ENCODE measurements at regions of chr1 and their contacts with region 1.

Region 1: DNA sequence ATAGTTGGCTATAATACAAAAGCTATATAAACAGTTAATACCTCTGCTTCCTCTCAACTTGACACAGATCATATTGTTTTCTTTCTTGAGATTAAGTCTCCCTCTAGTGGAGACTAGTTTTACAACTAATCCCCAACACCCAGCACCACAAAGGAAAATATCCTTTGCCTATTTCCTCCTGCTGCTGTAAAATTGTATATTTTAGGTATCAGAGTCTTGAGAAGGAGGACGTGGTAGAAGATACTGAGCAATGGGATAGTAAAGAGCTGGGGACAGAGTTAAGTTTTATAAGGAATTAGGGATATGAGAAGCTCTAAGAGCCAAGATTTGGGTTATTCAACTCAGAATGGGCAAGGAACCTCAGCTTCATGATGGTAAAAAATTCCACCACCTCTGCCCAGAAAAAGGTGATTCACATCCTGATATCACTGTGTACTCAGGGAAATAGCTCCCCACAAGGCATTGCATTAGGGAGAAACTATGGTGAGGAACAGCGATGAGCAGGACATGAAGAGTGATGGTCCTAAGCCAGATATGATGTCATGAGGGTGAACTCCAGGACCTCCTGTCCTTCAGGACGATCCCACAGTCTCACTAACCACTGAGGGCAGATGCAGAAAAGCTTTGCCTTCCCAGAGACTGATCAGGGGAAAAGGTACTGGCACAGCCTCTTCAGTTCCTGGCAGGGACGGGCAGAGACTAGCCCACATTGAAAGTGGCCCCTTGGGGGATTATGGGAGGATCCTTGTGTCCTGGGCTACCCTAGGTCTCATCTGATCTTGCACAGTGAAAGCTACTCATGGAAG is 14.7 kb upstream of the CFAP126 start:
- DNase-seq: no peak
- H3K4me3 Mint-ChIP-seq: no peak overlapping the region
- H3K27ac Mint-ChIP-seq: no peak overlapping the region
- H3K4me1 Mint-ChIP-seq: peaks cover 9% of the 10 kb centered on the region
- H3K27me3 Mint-ChIP-seq: no peaks in the 10 kb centered on the region
- CTCF ChIP-seq: peak; percentile 50

Region 2: GRCh38 chr1:161192476-161193465 is 189.6 kb before region 1 on chr1:
- CTCF ChIA-PET with region 1: interaction called, 8 read pairs
- intact Hi-C with region 1: loop called (anchors 2 kb)
- DNase-seq: peak; percentile 66
- H3K4me3 Mint-ChIP-seq: no peak overlapping the region
- H3K27ac Mint-ChIP-seq: no peak overlapping the region
- H3K4me1 Mint-ChIP-seq: peaks cover 13% of the 10 kb centered on the region
- H3K27me3 Mint-ChIP-seq: peaks cover 25% of the 10 kb centered on the region
- CTCF ChIP-seq: peak; percentile 83

Region 3: DNA sequence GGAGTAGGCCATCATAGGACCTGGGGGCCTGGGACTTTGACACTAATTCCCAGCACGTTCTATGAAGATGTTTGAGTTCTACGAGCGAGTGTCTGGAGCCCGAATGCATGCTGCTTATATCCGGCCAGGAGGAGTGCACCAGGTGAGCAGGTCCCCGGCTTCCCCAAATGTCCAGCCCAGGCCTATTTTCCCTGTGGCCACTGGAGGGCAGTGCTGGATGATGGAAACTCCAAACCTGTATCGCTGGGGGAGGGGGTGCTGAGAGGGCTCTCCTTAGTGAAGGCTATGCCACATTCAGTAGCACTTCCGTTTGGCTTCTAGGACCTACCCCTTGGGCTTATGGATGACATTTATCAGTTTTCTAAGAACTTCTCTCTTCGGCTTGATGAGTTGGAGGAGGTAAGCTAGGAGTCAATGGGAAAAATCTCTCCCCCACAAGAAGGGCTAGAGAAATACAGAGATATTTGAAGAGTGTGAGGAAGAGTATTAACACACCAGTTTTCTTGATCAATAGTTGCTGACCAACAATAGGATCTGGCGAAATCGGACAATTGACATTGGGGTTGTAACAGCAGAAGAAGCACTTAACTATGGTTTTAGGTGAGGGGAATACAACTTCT is 172.5 kb before region 1 on chr1:
- CTCF ChIA-PET with region 1: no interaction called
- intact Hi-C with region 1: loop called (anchors 5 kb)
- DNase-seq: peak; percentile 92
- H3K4me3 Mint-ChIP-seq: no peak overlapping the region
- H3K27ac Mint-ChIP-seq: no peak overlapping the region
- H3K4me1 Mint-ChIP-seq: peaks cover 14% of the 10 kb centered on the region
- H3K27me3 Mint-ChIP-seq: no peaks in the 10 kb centered on the region
- CTCF ChIP-seq: peak; percentile 87

Measured in Calu3 (cell line).